ENCODE measurements at regions of chr1 and their contacts with region 1.

Region 1: GRCh38 chr1:22527555-22528296 is 35.6 kb upstream of the EPHA8 start:
- DNase-seq: peak; percentile 71
- H3K4me3 ChIP-seq: no peak overlapping the region; a peak in 1 of 4 replicates
- H3K27ac ChIP-seq: peak overlapping the region in 1 of 2 experiments; percentile 76; a peak in 2 of 4 replicates
- H3K4me1 ChIP-seq: peaks cover 0 to 35% of the 10 kb centered on the region in 2 experiments; a peak in 1 of 4 replicates
- H3K27me3 ChIP-seq: no peaks in the 10 kb centered on the region
- CTCF ChIP-seq: peak; percentile 27
- EP300 ChIP-seq: no peak; a peak in 1 of 4 replicates
- RAD21 ChIP-seq: peak; percentile 83

Region 2: DNA sequence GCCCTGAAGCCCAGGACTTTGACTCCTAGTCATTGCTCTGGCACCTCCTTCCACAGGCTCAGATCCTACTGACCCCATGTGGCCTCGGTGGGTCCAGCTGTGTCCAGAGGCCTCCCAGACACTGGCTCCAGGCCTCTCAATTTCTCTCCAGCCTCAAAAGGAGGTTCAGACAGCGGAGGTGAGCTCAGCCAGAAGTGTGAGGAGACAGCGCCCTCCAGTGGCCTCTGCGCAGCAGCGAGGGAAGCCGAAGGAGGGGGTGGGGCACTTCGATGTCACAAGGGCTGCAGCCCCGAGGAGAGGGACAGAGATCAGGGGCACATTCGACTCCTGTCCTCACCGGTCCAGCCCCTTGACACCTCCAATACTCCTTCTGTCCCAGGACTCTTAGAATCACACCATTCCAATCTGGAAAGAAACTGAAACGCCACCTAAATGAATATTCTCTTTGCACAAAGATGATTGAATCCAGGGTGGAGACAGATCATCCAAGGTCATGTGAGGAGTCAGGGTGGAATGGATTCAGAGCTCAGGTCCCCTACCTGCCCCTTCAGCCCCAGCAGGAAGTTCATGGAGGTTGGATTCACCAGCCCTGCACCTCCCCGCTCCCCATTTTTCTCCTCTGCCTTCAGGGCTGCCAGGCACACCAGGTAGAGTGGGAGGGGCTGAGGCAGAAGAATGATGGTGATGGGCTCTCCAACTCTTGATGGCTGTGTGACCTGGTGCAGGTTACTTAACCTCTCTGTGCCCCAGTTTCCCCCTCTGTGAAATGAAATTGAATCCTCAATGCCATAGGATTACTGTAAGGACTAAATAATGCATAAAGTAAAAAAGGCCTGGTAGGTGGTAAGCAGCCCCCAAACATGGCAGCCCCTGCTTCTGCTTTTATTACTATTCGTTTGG is 110.9 kb before region 1 on chr1:
- CTCF ChIA-PET with region 1: interaction called, 96 read pairs
- POLR2A ChIA-PET with region 1: no interaction called
- DNase-seq: peak; percentile 84
- H3K4me3 ChIP-seq: 0 out of 4 replicates have a peak overlapping the region, but pooled peaks have one; percentile 9 to 45
- H3K27ac ChIP-seq: no peak overlapping the region; a peak in 1 of 4 replicates
- H3K4me1 ChIP-seq: peaks cover 7 to 26% of the 10 kb centered on the region in 2 experiments; a peak in 2 of 4 replicates
- H3K27me3 ChIP-seq: no peaks in the 10 kb centered on the region
- CTCF ChIP-seq: peak; percentile 97
- EP300 ChIP-seq: no peak
- RAD21 ChIP-seq: peak; percentile 98

Region 3: GRCh38 chr1:22503721-22504410 is 23.9 kb before region 1 on chr1:
- CTCF ChIA-PET with region 1: interaction called, 21 read pairs
- POLR2A ChIA-PET with region 1: no interaction called
- DNase-seq: no peak
- H3K4me3 ChIP-seq: no peak overlapping the region
- H3K27ac ChIP-seq: peak overlapping the region in 1 of 2 experiments; percentile 87; a peak in 2 of 4 replicates
- H3K4me1 ChIP-seq: peaks cover 6 to 40% of the 10 kb centered on the region in 2 experiments; a peak in 3 of 4 replicates
- H3K27me3 ChIP-seq: no peaks in the 10 kb centered on the region
- CTCF ChIP-seq: no peak
- EP300 ChIP-seq: no peak
- RAD21 ChIP-seq: no peak

Region 4: GRCh38 chr1:22567197-22567596 is 39.5 kb after region 1 on chr1:
- CTCF ChIA-PET with region 1: interaction called, 15 read pairs
- POLR2A ChIA-PET with region 1: interaction called, 7 read pairs
- DNase-seq: peak; percentile 58
- H3K4me3 ChIP-seq: no peak overlapping the region
- H3K27ac ChIP-seq: no peak overlapping the region
- H3K4me1 ChIP-seq: peaks cover 0 to 46% of the 10 kb centered on the region in 2 experiments; a peak in 2 of 4 replicates
- H3K27me3 ChIP-seq: peaks cover 45% of the 10 kb centered on the region
- CTCF ChIP-seq: no peak
- EP300 ChIP-seq: no peak
- RAD21 ChIP-seq: no peak

Region 5: DNA sequence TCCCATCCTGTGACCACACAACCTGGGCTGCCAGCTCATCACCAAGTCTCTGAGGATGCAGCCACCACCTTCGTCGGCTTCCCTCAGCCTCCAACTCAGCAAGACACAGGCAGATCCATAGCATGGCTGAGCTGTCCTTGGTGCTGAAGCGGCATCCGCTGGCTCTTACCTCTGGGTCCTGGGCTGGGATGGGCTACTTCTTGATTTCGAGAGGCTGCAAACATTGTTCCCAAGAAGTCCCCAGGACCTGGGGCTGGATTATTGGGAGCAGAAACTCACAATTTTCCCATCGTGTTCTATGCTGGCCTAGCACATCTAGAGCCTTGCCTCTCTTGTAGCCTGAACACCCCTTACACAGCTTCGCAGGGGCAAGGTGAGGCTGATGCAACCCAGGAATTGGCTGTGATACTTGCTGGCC is 83.8 kb after region 1 on chr1:
- CTCF ChIA-PET with region 1: interaction called, 11 read pairs
- POLR2A ChIA-PET with region 1: no interaction called
- DNase-seq: no peak
- H3K4me3 ChIP-seq: no peak overlapping the region
- H3K27ac ChIP-seq: no peak overlapping the region
- H3K4me1 ChIP-seq: peaks cover 0 to 4% of the 10 kb centered on the region in 2 experiments; a peak in 1 of 4 replicates
- H3K27me3 ChIP-seq: no peaks in the 10 kb centered on the region; the same call in 1 of the 2 replicates
- CTCF ChIP-seq: no peak
- EP300 ChIP-seq: no peak
- RAD21 ChIP-seq: no peak

Region 6: DNA sequence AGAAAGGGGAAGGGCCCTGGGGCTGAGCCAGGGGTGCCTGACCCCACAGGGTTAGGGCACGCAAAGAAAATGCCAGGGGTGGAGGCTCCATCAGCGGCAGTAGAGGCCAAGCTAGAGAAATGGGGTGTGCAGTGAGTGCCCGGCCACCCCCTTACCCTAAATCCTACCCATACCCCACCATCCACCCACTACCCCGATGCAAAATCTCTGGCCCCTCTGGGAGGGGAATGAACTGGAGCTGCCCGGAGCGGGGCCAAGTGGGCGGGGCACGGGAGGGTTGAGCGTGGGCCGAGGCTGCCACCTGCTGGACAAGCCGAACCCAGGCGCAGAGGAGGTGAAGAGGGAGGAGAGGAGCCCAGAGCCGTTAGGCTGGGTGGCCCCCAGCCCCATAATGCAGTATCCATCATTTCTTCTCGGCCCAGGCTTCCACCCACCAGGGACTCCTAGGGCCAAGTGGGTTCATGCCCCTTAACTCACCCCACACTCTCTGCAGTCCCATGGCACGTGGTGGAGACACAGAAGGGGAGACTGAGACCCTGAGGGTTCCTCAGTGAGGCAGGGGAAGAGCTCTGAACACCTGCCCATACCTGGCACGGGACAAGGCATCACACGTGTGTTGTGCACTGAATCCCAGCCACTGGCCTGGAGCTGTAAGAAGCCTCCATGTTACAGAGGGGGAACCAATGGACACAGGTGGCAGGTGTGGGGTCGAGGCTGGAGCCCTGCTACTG is 114.3 kb after region 1 on chr1:
- CTCF ChIA-PET with region 1: interaction called, 289 read pairs
- POLR2A ChIA-PET with region 1: interaction called, 3 read pairs
- DNase-seq: peak; percentile 95
- H3K4me3 ChIP-seq: no peak overlapping the region; a peak in 1 of 4 replicates
- H3K27ac ChIP-seq: no peak overlapping the region
- H3K4me1 ChIP-seq: peaks cover 0 to 11% of the 10 kb centered on the region in 2 experiments; a peak in 1 of 4 replicates
- H3K27me3 ChIP-seq: no peaks in the 10 kb centered on the region
- CTCF ChIP-seq: peak; percentile 84
- EP300 ChIP-seq: no peak
- RAD21 ChIP-seq: peak; percentile 94

Region 7: DNA sequence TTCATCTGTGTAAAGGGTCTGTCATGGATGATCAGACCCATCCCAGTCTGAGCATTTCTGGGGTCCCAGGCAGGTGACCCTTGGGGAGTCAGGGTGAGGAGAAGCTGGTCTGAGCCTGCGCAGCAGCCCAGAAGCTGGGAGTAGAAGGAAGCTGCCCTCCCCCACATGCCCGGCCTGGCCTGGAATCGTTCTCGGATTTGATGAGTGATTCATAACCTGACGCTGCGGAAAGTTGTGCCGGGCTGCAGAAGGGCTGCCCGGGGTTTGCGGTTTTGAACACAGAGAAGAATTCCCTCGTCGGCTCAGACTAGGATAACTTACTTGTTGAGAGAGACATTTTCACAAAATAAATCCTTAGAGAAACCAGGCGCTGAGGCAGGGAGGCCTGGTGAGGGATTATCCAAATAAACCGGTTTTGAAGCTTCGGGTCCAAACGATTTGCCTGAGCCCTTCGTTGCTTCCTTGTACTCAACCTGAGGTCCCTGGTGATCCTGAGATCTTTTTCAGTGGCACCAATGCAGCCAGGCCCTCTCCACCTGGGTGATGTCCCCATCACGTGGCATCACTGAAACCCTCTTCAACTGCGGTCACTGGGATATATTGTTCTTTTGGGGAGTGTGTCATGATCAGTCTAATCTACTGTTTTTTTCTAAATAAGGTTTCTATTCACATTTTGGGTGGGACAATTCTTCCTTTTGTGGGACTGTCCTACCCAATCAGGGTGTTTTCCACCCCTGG is 212.1 kb after region 1 on chr1:
- CTCF ChIA-PET with region 1: no interaction called
- POLR2A ChIA-PET with region 1: no interaction called
- DNase-seq: no peak
- H3K4me3 ChIP-seq: no peak overlapping the region
- H3K27ac ChIP-seq: peak overlapping the region; percentile 67 to 93; a peak in 3 of 4 replicates
- H3K4me1 ChIP-seq: peaks cover 13 to 24% of the 10 kb centered on the region in 2 experiments; a peak in 3 of 4 replicates
- H3K27me3 ChIP-seq: no peaks in the 10 kb centered on the region
- CTCF ChIP-seq: no peak
- EP300 ChIP-seq: peak in 1 of 2 experiments; percentile 87; a peak in 2 of 4 replicates
- RAD21 ChIP-seq: no peak

Measured in SK-N-SH (cell line).